Endothelial cell of umbilical vein (primary cell): ENCODE measurements at regions of chr1 and their contacts with region 1.

Region 1: GRCh38 chr1:183070923-183071618 is 47.9 kb downstream of the LAMC1 start:
- DNase-seq: peak; percentile 94
- H3K4me3 ChIP-seq: no peak overlapping the region
- H3K27ac ChIP-seq: peak overlapping the region; percentile 44
- H3K4me1 ChIP-seq: peaks cover 22% of the 10 kb centered on the region
- H3K27me3 ChIP-seq: no peaks in the 10 kb centered on the region
- CTCF ChIP-seq: no peak
- POLR2A ChIP-seq: no peak

Region 2: DNA sequence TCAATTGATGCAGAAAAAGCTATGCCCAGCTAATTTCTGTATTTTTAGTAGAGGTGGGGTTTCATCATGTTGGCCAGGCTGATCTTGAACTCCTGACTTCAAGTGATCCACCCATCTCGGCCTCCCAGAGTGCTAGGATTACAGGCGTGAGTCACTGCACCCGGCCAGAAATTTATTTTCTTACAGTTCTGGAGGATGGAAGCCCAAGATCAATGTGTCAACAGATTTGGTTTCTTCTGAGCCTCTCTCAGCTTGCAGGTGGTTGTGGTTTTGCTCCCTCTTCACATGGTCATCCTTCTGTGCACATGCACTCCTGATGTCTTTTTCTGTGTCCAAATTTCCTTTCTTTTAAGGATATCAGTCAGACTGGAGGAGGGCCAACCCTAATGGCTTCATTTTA is 153.7 kb before region 1 on chr1:
- CTCF ChIA-PET with region 1: no interaction called
- POLR2A ChIA-PET with region 1: no interaction called
- dilution Hi-C with region 1: no loop called
- intact Hi-C with region 1: no loop called
- DNase-seq: no peak
- H3K4me3 ChIP-seq: no peak overlapping the region
- H3K27ac ChIP-seq: no peak overlapping the region
- H3K4me1 ChIP-seq: no peaks in the 10 kb centered on the region
- H3K27me3 ChIP-seq: peaks cover 7 to 10% of the 10 kb centered on the region in 2 experiments
- CTCF ChIP-seq: no peak
- POLR2A ChIP-seq: no peak

Region 3: GRCh38 chr1:183058851-183059502 is 12.1 kb before region 1 on chr1:
- CTCF ChIA-PET with region 1: interaction called, 7 read pairs
- POLR2A ChIA-PET with region 1: interaction called, 3 read pairs
- dilution Hi-C with region 1: no loop called
- intact Hi-C with region 1: loop called (anchors 1 kb)
- DNase-seq: peak; percentile 50
- H3K4me3 ChIP-seq: no peak overlapping the region
- H3K27ac ChIP-seq: peak overlapping the region; percentile 85
- H3K4me1 ChIP-seq: peaks cover 24% of the 10 kb centered on the region
- H3K27me3 ChIP-seq: no peaks in the 10 kb centered on the region
- CTCF ChIP-seq: no peak
- POLR2A ChIP-seq: no peak